ENCODE measurements at regions of chr16 and their contacts with region 1.

Region 1: DNA sequence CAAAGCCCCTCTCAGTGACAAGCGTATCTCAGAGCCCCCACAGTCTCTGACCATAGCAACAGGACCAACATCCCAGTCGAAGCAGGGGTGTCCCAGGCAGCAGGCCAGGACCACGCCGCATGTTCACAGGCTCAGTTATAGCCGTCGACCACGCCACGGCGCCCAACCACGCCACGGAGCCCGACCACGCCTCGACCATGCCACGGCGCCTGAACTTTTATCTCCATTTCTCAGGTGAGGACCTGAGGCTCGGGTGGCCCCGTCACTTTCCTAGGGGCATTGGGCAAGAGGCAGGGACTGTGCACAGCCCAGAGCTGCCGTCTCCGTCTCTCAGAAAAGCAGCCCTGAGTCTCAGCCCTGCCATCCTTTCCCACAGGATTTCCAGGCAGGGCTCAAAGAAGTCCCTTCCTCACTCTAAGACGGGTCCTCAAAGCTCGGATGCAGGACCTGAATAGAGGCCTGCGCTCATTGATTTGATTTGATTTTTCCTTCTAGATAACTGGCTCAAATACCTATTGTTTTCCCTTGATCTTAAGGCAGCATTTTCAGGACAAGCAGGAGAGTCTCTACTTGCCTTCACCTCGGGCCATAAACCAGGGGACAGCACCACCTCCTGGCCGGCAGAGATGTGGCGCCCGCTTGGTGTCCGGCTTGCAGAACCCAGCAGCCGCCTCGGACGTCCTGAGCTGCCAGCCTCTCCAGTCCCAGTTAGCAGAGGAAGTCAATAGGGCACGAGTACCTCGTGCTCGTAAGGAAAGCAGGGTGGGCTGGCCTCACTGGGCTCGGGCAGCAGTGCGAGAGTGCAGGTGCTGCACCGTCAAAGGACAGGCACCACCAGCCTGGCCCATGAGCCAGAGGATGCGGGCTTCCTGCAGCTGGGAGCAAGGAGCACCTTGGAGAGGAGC is 38.7 kb downstream of the C16orf95 start:
- DNase-seq: peak; percentile 88 to 94
- ATAC-seq: peak; percentile 91
- H3K4me3 ChIP-seq: no peak overlapping the region
- H3K27ac ChIP-seq: no peak overlapping the region
- H3K4me1 ChIP-seq: no peaks in the 10 kb centered on the region
- H3K27me3 ChIP-seq: no peaks in the 10 kb centered on the region

Region 2: DNA sequence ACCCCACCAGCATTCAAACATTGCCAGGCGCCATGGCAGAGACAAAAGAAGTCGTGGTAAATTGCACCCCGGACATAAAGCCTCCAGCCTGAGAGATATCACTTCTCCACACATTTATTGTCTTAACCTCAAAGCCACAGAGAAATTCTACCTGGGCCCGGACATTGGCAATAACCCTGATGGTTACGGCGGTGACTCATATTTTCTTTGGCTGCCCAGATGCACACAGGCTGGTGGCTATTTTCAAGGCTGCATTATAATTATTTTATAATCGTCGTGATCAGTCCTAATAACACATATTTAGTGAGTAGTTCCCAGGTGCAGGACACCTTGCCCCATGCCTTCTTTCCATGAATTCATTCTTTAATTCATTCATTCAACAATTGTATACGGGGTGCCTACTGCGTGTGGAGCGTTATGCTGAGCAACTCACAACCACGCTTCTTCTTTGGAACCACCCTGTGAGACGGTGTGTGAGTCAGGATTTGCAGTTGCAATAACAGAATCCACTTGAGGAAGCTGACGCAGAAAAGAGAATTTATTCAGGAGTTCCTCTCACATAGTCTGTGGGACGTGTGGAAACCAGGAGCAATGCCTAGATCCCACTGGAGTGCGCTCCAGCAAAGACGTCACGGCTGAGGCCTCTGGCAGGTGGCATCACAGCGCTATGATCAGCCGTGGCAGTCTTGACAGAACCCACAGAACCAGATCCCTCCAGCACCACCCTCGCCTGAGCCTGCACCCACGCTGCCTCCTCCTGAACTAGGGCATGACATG is 454.4 kb before region 1 on chr16:
- intact Hi-C with region 1: loop called in 1 of 2 experiments (anchors 10 kb)
- DNase-seq: no peak
- ATAC-seq: no peak
- H3K4me3 ChIP-seq: no peak overlapping the region
- H3K27ac ChIP-seq: no peak overlapping the region
- H3K4me1 ChIP-seq: no peaks in the 10 kb centered on the region
- H3K27me3 ChIP-seq: no peaks in the 10 kb centered on the region

Region 3: GRCh38 chr16:87067836-87068761 is 210.3 kb before region 1 on chr16:
- intact Hi-C with region 1: loop called (anchors 5 kb)
- DNase-seq: no peak
- ATAC-seq: peak; percentile 57
- H3K4me3 ChIP-seq: no peak overlapping the region
- H3K27ac ChIP-seq: peak overlapping the region; percentile 18 to 22
- H3K4me1 ChIP-seq: no peaks in the 10 kb centered on the region
- H3K27me3 ChIP-seq: no peaks in the 10 kb centered on the region

Region 4: DNA sequence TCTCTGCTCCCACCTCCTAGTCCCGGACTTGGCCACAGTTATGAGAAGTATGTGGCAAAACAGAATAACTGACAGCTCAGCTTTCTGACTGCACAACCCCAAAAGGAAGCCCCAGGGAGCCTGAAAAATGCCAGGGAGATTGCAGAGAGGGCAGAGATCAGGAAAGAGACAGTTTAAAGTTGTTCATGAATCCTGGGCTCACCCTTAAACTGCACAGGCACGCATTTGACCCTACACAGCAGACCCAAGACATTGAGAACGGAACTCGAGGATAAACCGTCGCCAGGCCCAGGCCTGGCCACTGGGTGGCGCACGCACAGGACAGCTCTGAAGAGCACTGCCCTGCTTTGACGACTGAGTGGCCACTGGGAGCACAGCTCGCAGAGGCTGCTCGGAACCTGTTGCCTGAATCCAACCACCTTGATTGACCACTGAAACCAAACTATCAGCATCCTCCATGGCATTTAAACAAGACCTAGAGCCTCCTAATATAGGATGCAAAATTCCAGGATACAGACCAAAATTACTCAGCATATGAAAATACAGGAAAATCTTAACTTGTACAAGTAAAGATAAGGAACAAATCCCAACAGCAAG is 75.3 kb before region 1 on chr16:
- intact Hi-C with region 1: loop called (anchors 5 kb)
- DNase-seq: peak; percentile 82 to 89
- ATAC-seq: no peak
- H3K4me3 ChIP-seq: no peak overlapping the region
- H3K27ac ChIP-seq: peak overlapping the region in 1 of 2 donors; percentile 12
- H3K4me1 ChIP-seq: peaks cover 0 to 4% of the 10 kb centered on the region in 2 donors
- H3K27me3 ChIP-seq: no peaks in the 10 kb centered on the region

Measured in aorta (tissue), 5 donors.